Activated CD4-positive, alpha-beta T cell treated with anti-CD3 and anti-CD28 coated beads, Interleukin-2, amount 10 ng/mL, durations not matched to agents 24 days and 14 days (primary cell): ENCODE measurements at regions of chr21 and their contacts with region 1.

Region 1: GRCh38 chr21:15064576-15065391 is at the start of gene NRIP1:
- DNase-seq: peak; percentile 95
- H3K4me3 Mint-ChIP-seq: peak within 1 kb of the TSS; percentile 95
- H3K27ac Mint-ChIP-seq: peak within 1 kb of the TSS; percentile 95
- H3K4me1 Mint-ChIP-seq: peaks cover 45% of the 10 kb centered on the region
- H3K27me3 Mint-ChIP-seq: peaks cover 28% of the 10 kb centered on the region
- total RNA-seq, gene NRIP1: 10.1 and 10.2 TPM in 2 replicates

Region 2: DNA sequence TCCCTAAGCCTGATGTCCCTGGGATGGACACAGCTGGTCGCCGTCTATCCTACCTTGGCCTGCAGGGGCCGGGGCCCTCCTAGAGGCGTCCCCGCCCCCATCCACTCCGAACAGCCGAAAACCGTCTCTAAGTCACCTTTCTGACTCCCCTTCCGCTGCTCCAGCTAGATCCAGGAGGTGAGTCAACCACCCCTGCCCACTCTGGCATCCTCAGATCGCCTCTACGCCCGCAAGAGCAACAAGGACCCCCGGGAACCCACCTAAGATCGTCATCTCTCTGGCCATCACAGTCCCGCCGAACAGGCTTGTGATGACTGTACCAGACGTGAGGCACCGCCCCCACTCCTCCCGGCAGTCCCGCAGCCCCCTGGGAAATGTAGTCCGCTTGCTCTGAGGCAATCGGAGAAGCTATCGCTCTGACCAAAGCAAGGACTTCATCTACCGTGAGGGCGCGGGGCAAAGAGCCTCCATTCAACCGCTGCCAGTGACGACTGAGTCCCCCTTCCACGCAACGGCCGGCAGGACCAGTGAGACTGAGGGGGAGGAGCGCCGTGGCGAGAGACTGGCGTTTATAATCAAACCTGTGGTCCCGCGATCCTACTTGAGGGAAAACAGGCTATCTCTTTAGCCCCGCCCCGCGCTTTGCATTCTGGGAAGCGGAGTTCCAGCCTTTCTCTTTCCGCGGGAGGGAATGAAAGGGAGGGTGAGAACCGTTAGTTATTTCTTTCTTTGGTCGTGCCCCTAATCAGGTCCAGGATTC is 681.8 kb before region 1 on chr21 and contains the start of gene HSPA13:
- intact Hi-C with region 1: loop called (anchors 2 kb)
- DNase-seq: peak; percentile 100
- H3K4me3 Mint-ChIP-seq: peak within 1 kb of the TSS; percentile 94
- H3K27ac Mint-ChIP-seq: peak within 1 kb of the TSS; percentile 96
- H3K4me1 Mint-ChIP-seq: peaks cover 35% of the 10 kb centered on the region
- H3K27me3 Mint-ChIP-seq: peaks cover 2% of the 10 kb centered on the region
- total RNA-seq, gene HSPA13: 40.9 and 41.6 TPM in 2 replicates

Region 3: GRCh38 chr21:14762734-14763694 is 301.8 kb before region 1 on chr21:
- intact Hi-C with region 1: loop called (anchors 10 kb)
- DNase-seq: peak; percentile 65
- H3K4me3 Mint-ChIP-seq: no peak overlapping the region
- H3K27ac Mint-ChIP-seq: no peak overlapping the region
- H3K4me1 Mint-ChIP-seq: peaks cover 8% of the 10 kb centered on the region
- H3K27me3 Mint-ChIP-seq: no peaks in the 10 kb centered on the region

Region 4: GRCh38 chr21:14864211-14865021 is 200.4 kb before region 1 on chr21:
- intact Hi-C with region 1: loop called (anchors 10 kb)
- DNase-seq: peak; percentile 82
- H3K4me3 Mint-ChIP-seq: no peak overlapping the region
- H3K27ac Mint-ChIP-seq: no peak overlapping the region
- H3K4me1 Mint-ChIP-seq: peaks cover 6% of the 10 kb centered on the region
- H3K27me3 Mint-ChIP-seq: peaks cover 4% of the 10 kb centered on the region

Region 5: GRCh38 chr21:14977814-14978213 is 87.0 kb before region 1 on chr21:
- intact Hi-C with region 1: no loop called
- DNase-seq: no peak
- H3K4me3 Mint-ChIP-seq: no peak overlapping the region
- H3K27ac Mint-ChIP-seq: no peak overlapping the region
- H3K4me1 Mint-ChIP-seq: no peaks in the 10 kb centered on the region
- H3K27me3 Mint-ChIP-seq: no peaks in the 10 kb centered on the region

Region 6: DNA sequence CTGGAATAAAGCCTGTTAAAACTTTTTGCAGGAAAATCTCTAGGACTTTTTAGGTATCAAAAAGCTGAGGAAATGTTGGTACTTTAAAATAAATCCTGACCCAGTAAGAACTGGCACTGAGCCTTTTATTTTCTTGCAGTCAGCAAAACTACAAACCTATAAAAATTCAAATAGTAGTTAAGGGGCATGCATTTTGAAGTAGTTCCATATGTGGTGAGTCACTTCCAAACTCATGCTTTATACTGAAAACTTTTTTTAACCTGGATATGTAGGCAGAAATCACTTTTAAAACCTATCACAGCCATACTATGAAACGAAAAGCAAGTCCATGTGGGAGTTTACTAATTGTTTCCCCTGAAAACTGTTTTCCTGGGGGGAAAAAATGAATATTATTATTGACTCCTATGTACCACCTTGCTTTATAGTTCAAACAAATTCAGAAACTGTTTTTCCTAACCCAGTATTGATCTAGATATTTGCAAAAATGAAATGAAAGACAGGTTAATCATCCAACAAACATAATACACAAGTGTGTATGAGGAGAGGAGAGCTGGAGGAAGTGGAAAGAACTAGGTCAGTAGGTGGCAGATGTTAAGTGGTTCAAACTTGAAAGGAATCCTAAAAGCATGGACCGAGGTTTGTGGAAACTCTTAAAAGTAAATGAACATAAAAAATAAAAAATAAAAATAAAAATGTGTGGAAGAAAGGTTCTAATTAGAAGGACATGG is 30.5 kb before region 1 on chr21:
- intact Hi-C with region 1: loop called (anchors 2 kb)
- DNase-seq: no peak
- H3K4me3 Mint-ChIP-seq: peak overlapping the region; percentile 13
- H3K27ac Mint-ChIP-seq: peak overlapping the region; percentile 51
- H3K4me1 Mint-ChIP-seq: peaks cover 7% of the 10 kb centered on the region
- H3K27me3 Mint-ChIP-seq: no peaks in the 10 kb centered on the region

Region 7: GRCh38 chr21:15437883-15438282 is 373.1 kb after region 1 on chr21:
- intact Hi-C with region 1: loop called (anchors 1 kb)
- DNase-seq: peak; percentile 58
- H3K4me3 Mint-ChIP-seq: no peak overlapping the region
- H3K27ac Mint-ChIP-seq: no peak overlapping the region
- H3K4me1 Mint-ChIP-seq: peaks cover 7% of the 10 kb centered on the region
- H3K27me3 Mint-ChIP-seq: no peaks in the 10 kb centered on the region

Region 8: DNA sequence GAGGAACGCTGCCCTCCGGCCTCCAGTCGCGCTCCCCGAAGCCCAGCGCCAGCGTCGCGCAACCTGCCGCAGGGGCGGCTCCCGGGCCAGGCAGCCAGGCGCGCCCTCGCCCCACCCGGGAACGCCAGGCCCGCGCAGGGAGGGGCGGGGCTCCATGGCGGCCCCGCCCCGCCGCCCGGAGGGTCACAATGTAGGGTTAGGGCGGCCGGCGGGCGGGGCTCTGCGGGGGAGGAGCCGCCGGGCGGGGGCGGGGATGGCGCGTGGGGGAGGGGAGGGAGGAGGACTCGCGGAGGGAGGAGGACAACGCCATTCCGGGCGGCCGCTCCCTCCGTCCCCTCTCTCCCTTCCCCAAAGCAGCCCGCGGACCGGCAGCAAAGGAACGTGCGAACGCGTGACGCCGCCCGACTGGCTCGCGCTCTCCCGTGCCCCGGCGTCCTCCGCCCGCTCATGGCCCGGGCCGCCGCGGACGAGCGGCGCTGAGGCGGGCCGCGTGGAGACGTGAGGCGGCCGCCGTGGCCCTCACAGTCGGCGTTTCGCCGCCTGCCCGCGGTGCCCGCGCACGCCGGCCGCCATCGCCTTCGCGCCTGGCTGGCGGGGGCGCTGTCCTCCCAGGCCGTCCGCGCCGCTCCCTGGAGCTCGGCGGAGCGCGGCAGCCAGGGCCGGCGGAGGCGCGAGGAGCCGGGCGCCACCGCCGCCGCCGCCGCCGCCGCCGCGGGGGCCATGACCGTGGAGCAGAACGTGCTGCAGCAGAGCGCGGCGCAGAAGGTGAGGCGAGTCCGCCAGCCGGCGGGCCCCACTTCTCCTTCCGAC is 665.1 kb after region 1 on chr21 and contains the start of gene USP25:
- intact Hi-C with region 1: loop called (anchors 2 kb)
- DNase-seq: peak; percentile 94
- H3K4me3 Mint-ChIP-seq: peak within 1 kb of the TSS; percentile 94
- H3K27ac Mint-ChIP-seq: peak within 1 kb of the TSS; percentile 92
- H3K4me1 Mint-ChIP-seq: peaks cover 12% of the 10 kb centered on the region
- H3K27me3 Mint-ChIP-seq: peaks cover 21% of the 10 kb centered on the region
- total RNA-seq, gene USP25: 27.3 and 29.0 TPM in 2 replicates